ENCODE measurements at regions of chr2 and their contacts with region 1.

Region 1: DNA sequence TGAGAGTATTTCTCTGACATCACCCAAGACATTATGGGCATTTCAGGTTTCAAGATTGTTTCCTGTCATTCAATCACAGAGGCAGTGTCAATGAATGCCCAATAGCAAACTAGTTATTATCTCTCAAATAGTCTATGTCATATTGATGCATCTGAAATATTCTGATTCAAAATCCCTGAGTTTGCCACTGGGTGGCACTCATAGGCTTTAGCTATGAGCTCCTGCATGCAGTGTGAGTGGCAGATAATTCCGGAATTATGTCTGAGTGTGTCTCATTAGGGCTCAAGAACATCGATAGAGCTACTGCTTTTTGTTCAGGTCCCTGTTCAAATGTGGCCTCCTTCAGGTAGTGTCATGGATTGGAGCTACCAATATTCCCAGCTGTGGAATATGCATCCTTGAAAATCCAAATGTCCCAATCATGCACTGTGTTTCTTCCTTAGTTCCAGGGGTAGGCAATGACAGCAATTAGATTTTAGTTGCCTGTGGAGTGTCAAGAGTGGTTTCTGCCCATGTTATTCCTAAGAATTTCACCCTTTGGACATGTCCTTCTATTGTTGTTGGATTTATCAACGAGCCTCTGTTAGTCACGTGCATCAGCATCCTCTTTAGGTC is 7.8 kb upstream of the OR6B3 start:
- DNase-seq: peak; percentile 32 to 71 (median 49)
- H3K4me3 ChIP-seq: no peak overlapping the region
- H3K27ac ChIP-seq: no peak overlapping the region
- H3K4me1 ChIP-seq: no peaks in the 10 kb centered on the region
- H3K27me3 ChIP-seq: no peaks in the 10 kb centered on the region
- CTCF ChIP-seq: peak; percentile 40 to 73 (median 71)
- POLR2A ChIP-seq: no peak

Region 2: GRCh38 chr2:240143801-240144648 is 82.9 kb after region 1 on chr2:
- intact Hi-C with region 1: loop called (anchors 2 to 5 kb)
- DNase-seq: peak; percentile 49 to 85 (median 71)
- H3K4me3 ChIP-seq: no peak overlapping the region
- H3K27ac ChIP-seq: no peak overlapping the region
- H3K4me1 ChIP-seq: no peaks in the 10 kb centered on the region
- H3K27me3 ChIP-seq: peaks cover 4% of the 10 kb centered on the region
- CTCF ChIP-seq: peak; percentile 81 to 96 (median 91)
- POLR2A ChIP-seq: no peak